Caco-2 (cell line): ENCODE measurements at regions of chr20 and their contacts with region 1.

Region 1: GRCh38 chr20:49338061-49338460 is 60.2 kb upstream of the ZNFX1 start:
- DNase-seq: no peak
- H3K4me3 ChIP-seq: no peak overlapping the region
- H3K4me3 Mint-ChIP-seq: no peak overlapping the region
- H3K27ac Mint-ChIP-seq: no peak overlapping the region
- H3K4me1 ChIP-seq: peaks cover 4% of the 10 kb centered on the region
- H3K4me1 Mint-ChIP-seq: no peaks in the 10 kb centered on the region
- H3K27me3 ChIP-seq: peaks cover 1% of the 10 kb centered on the region; the same call in 1 of the 2 replicates
- H3K27me3 Mint-ChIP-seq: peaks cover 16% of the 10 kb centered on the region
- CTCF ChIP-seq: no peak

Region 2: GRCh38 chr20:49534255-49534712 is 196.2 kb after region 1 on chr20:
- CTCF ChIA-PET with region 1: interaction called, 3 read pairs
- POLR2A ChIA-PET with region 1: no interaction called
- intact Hi-C with region 1: loop called (anchors 1 kb)
- DNase-seq: peak; percentile 81 to 88
- H3K4me3 ChIP-seq: no peak overlapping the region
- H3K4me3 Mint-ChIP-seq: no peak overlapping the region
- H3K27ac Mint-ChIP-seq: no peak overlapping the region
- H3K4me1 ChIP-seq: no peaks in the 10 kb centered on the region
- H3K4me1 Mint-ChIP-seq: no peaks in the 10 kb centered on the region
- H3K27me3 ChIP-seq: no peaks in the 10 kb centered on the region
- H3K27me3 Mint-ChIP-seq: peaks cover 4% of the 10 kb centered on the region
- CTCF ChIP-seq: peak; percentile 93 to 99

Region 3: GRCh38 chr20:49846206-49846807 is 508.2 kb after region 1 on chr20:
- CTCF ChIA-PET with region 1: no interaction called
- POLR2A ChIA-PET with region 1: no interaction called
- intact Hi-C with region 1: loop called (anchors 10 kb)
- DNase-seq: peak; percentile 71 to 87
- H3K4me3 ChIP-seq: no peak overlapping the region
- H3K4me3 Mint-ChIP-seq: no peak overlapping the region
- H3K27ac Mint-ChIP-seq: no peak overlapping the region
- H3K4me1 ChIP-seq: no peaks in the 10 kb centered on the region
- H3K4me1 Mint-ChIP-seq: no peaks in the 10 kb centered on the region
- H3K27me3 ChIP-seq: no peaks in the 10 kb centered on the region
- H3K27me3 Mint-ChIP-seq: no peaks in the 10 kb centered on the region
- CTCF ChIP-seq: peak; percentile 87 to 92